Dendritic cell treated with granulocyte-macrophage colony-stimulating factor and Interleukin-4, amounts not matched to agents 40 ng/mL and 50 ng/mL, for 4 days (primary cell): ENCODE measurements at regions of chr11 and their contacts with region 1.

Region 1: DNA sequence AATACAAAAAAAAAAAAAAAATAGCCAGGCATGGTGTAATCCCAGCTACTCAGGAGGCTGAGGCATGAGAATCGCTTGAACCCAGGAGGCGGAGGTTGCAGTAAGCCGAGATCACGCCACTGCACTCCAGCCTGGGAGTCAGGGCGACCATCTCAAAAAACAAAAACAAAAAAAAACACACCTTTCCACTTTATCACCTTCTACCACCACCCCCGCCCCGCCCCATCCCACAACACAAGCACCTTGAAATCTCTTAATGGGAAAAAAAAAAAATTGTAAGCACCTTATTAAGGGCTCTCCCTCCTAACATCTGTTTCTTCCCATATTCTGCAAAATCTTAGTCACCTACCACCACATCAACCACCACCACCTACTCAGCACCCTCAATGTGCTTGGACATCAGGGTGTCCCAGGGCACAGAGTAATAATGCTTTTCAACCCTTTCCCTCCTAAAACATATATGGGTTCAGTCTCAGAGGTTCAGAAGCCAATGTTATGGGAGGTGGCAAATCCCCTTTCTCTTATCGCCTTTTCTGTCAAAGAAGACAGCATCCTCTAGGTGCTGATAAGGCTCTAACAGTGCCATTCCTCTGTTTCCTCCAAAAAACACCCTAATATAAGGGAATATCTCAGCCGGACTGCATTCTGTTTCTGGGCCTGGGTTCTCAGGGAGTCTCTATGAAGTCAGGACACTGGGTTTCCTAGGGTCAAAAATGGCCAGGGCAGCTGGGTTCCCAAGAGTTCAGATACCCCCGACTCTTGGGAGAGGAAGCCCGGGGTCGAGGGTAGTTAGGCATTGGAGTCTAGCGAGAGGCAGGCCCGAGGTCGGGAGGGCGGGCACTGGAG is 718 bp downstream of the INTS5 start:
- H3K4me3 Mint-ChIP-seq: peak overlapping the region; percentile 96
- H3K27ac Mint-ChIP-seq: peak overlapping the region; percentile 93
- H3K4me1 Mint-ChIP-seq: peaks cover 26% of the 10 kb centered on the region
- H3K27me3 Mint-ChIP-seq: no peaks in the 10 kb centered on the region

Region 2: DNA sequence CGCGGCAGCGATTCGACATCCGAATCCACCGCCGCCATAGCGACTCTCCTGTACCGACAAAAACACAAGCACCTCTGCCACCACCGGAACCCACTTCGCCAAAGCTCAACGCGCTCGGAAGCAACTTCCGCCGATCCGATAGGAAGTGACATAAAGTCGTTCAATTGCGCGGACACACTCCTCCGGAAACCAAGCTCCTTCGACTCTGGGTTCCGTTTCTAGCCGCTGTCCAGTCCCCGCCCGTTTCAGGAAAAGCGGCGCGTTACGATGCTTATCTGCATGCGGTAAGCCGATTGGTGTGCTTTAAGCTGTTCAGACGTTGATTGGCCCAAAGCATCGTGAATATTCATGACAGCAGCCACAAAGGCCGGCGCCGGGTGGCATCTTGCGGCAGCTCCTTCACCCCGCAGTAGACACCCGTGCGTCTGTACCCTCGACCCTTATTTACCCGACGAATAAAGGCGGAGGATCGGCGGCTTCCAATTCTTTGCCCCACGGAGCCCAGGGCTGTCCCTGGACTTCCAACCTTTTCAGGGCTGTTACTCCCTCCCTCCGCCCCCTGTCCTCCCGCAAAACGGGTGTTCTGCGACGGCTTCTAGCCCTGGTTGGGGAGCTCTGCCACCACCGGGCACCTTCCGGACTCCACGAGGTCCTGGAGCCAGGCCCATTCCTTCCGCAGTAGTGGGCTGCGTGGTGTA is 60.8 kb before region 1 on chr11 and contains the start of gene TUT1:
- intact Hi-C with region 1: no loop called
- H3K4me3 Mint-ChIP-seq: peak within 1 kb of the TSS; percentile 91
- H3K27ac Mint-ChIP-seq: peak within 1 kb of the TSS; percentile 97
- H3K4me1 Mint-ChIP-seq: peaks cover 39% of the 10 kb centered on the region
- H3K27me3 Mint-ChIP-seq: no peaks in the 10 kb centered on the region

Region 3: DNA sequence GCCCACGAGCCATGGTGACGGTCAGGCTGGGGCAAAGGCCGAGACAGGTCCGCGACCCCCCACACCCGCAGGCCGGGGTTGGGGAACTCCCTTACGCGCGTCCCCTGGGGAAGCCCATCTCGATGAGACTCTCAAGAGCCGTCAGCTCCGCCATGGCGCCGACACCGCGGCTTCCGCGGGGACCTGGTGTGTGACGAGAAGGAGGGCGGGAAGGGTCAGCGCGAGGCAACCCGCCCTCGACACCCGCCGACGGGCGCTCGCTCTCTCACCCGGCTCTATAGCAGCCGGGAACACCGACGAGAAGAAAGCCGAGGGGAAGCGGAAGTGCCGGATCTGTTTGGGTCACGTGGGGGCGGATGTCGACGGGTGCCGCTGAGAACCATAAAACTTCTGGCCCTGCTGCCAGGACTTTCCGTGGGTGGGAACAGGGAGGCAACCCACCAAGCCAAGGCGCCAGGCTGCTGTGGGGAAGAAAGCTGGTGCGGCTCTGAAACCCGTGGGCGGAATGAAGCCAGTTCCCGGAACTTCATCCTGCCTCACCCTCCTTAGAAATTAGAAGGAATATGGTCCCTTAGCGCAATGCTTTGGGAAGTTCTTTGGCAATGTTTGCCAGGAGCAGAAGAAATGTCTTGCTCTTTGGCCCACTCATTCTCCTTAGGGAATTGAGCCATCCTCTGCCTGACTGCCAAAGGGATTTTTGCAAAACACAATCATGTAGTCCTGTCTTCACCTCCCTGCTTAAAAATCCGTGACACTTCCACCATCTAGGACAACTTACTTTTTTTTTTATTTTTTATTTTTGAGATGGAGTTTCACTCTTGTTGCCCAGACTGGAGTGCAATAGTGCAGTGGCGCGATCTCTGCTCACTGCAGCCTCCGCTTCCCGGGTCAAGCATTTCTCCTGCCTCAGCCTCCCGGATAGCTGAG is 26.6 kb after region 1 on chr11 and contains the start of gene UBXN1:
- intact Hi-C with region 1: loop called (anchors 1 kb)
- H3K4me3 Mint-ChIP-seq: peak within 1 kb of the TSS; percentile 87
- H3K27ac Mint-ChIP-seq: peak within 1 kb of the TSS; percentile 95
- H3K4me1 Mint-ChIP-seq: peaks cover 44% of the 10 kb centered on the region
- H3K27me3 Mint-ChIP-seq: no peaks in the 10 kb centered on the region